ENCODE measurements at regions of chr17 and their contacts with region 1.

Region 1: GRCh38 chr17:60333628-60334031 is 58.3 kb downstream of the USP32 start:
- DNase-seq: no peak
- H3K4me3 ChIP-seq: no peak overlapping the region
- H3K27ac ChIP-seq: no peak overlapping the region
- H3K4me1 ChIP-seq: 0 out of 2 replicates have a peak, but pooled peaks cover 3% of the 10 kb centered on the region
- H3K27me3 ChIP-seq: no peaks in the 10 kb centered on the region

Region 2: GRCh38 chr17:60392042-60392844 is 58.6 kb after region 1 on chr17 and contains the start of gene USP32:
- in situ Hi-C with region 1: loop called (anchors 10 kb)
- DNase-seq: peak; percentile 99
- H3K4me3 ChIP-seq: peak within 1 kb of the TSS; percentile 89
- H3K27ac ChIP-seq: peak within 1 kb of the TSS; percentile 91
- H3K4me1 ChIP-seq: peaks cover 30% of the 10 kb centered on the region
- H3K27me3 ChIP-seq: no peaks in the 10 kb centered on the region
- total RNA-seq, gene USP32: 30.1 and 33.9 TPM in 2 replicates

Measured in GM23248 (cell line).